ENCODE measurements at regions of chr14 and their contacts with region 1.

Region 1: GRCh38 chr14:32076278-32077080 is 625 bp upstream of the ARHGAP5 start:
- DNase-seq: peak; percentile 97
- H3K4me3 Mint-ChIP-seq: peak overlapping the region; percentile 98
- H3K27ac Mint-ChIP-seq: peak overlapping the region; percentile 96
- H3K4me1 Mint-ChIP-seq: peaks cover 31% of the 10 kb centered on the region
- H3K27me3 Mint-ChIP-seq: no peaks in the 10 kb centered on the region
- CTCF ChIP-seq: no peak

Region 2: DNA sequence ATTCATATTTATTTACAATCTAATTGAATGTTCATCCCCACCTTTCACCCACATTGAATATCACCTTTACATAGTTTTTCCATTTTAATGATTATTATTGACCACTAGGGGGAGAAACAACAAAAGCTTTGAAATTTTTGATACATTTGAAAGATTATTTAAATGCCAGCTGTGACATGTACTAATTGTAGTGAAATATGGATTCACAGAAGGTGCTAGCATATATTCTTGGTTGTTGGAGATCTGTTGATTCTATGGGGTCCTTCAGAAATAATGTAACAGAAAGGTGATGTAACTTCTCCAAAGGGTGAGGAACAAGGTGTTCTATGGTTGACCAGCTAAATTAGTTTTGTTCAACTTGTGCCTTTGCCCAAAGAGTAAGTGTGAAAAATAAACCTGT is 566.3 kb before region 1 on chr14:
- CTCF ChIA-PET with region 1: no interaction called
- POLR2A ChIA-PET with region 1: no interaction called
- intact Hi-C with region 1: loop called (anchors 2 kb)
- DNase-seq: peak; percentile 43
- H3K4me3 Mint-ChIP-seq: no peak overlapping the region
- H3K27ac Mint-ChIP-seq: no peak overlapping the region
- H3K4me1 Mint-ChIP-seq: peaks cover 8% of the 10 kb centered on the region
- H3K27me3 Mint-ChIP-seq: no peaks in the 10 kb centered on the region
- CTCF ChIP-seq: peak; percentile 44

Region 3: DNA sequence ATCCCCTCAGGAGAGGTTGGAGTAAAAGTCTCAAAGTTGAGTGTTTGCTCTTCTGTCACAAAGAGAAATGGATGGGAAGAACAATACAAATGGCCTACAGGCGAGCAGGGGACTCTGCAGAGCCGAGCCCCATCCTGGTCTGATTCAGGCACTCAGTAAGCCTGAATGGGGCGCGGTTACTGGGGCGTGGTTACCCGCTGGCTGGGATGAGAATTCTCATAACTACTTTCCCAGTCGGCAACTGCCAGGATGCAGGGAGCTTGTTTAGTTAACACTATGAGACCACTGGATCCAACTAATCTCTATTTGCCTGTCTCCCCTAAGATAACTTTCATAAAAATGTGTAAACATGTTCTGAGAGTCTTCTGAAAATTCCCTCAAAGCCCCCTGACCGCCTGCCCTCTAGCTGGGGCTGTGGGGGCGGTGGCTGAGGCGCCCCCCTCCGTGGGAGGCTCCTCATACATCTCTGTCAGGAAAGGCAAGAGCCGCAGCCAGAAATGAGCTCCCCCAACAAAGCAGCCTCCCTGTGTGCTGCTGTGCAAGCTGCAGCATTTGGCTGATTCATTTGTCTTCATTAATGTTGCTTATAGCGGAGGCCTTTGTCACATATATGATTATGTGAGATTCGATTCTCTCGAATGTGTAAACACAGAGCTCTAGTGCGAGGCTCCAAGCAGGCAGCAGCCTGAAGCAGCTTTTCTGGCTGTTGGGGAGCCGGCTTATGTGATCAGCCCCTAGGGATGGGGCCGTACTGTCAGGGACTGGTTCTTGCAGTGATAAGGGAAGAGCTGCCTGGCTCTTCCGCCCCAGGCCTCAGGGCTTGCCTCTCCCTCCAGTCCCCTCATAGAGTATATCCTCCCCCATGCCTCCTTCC is 125.5 kb before region 1 on chr14:
- CTCF ChIA-PET with region 1: interaction called, 4 read pairs
- POLR2A ChIA-PET with region 1: interaction called, 38 read pairs
- intact Hi-C with region 1: no loop called
- DNase-seq: peak; percentile 67
- H3K4me3 Mint-ChIP-seq: no peak overlapping the region
- H3K27ac Mint-ChIP-seq: peak overlapping the region; percentile 37
- H3K4me1 Mint-ChIP-seq: peaks cover 45% of the 10 kb centered on the region
- H3K27me3 Mint-ChIP-seq: no peaks in the 10 kb centered on the region
- CTCF ChIP-seq: no peak

Region 4: DNA sequence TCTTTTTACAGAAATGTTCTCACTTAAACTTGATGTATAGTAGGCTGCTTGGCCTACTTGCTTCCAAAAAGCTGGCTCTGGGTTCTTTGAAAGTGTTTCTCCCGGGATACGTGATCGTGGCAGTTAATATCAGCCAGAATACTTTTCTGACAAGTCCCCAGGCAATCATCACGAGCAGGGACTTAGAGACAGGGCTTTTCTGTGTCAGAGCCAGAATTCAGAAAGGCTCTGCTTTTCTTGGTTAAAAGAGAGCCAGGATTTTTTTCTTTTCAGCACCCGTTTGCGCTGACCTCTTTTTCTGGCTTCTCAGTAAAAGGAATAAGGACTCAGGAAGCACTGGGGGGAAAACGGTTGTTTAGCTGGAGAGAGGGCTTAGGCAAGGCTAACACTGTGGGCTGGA is 57.2 kb before region 1 on chr14:
- CTCF ChIA-PET with region 1: interaction called, 10 read pairs
- POLR2A ChIA-PET with region 1: interaction called, 107 read pairs
- intact Hi-C with region 1: no loop called
- DNase-seq: no peak
- H3K4me3 Mint-ChIP-seq: no peak overlapping the region
- H3K27ac Mint-ChIP-seq: peak overlapping the region; percentile 31
- H3K4me1 Mint-ChIP-seq: peaks cover 21% of the 10 kb centered on the region
- H3K27me3 Mint-ChIP-seq: no peaks in the 10 kb centered on the region
- CTCF ChIP-seq: no peak

Region 5: GRCh38 chr14:32202998-32203882 is 126.8 kb after region 1 on chr14 and contains the start of gene RNU6-8:
- CTCF ChIA-PET with region 1: interaction called, 4 read pairs
- POLR2A ChIA-PET with region 1: interaction called, 14 read pairs
- intact Hi-C with region 1: loop called (anchors 2 kb)
- DNase-seq: peak; percentile 87
- H3K4me3 Mint-ChIP-seq: peak within 1 kb of the TSS; percentile 89
- H3K27ac Mint-ChIP-seq: peak within 1 kb of the TSS; percentile 98
- H3K4me1 Mint-ChIP-seq: peaks cover 21% of the 10 kb centered on the region
- H3K27me3 Mint-ChIP-seq: no peaks in the 10 kb centered on the region
- CTCF ChIP-seq: no peak
- total RNA-seq, gene RNU6-8: not detected in 2 replicates

Region 6: DNA sequence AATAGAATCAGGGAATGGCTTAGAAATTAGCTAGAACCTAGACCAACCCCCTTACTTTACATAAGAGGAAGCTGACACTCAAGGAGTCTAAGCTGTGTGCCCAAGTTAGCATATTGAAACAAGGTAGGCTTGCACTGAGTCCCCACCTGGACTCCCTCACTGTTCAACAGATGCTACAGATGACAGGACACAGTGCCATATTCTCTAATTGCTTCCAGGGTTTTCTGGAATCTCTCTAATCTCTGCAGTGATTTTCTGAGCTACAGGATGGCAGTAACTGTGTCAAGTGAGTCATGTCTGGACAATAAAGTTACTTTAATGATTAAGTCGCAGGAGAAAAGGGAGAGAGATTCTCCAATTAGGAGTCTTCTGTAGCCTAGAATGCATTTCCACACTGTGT is 288.5 kb after region 1 on chr14:
- CTCF ChIA-PET with region 1: no interaction called
- POLR2A ChIA-PET with region 1: no interaction called
- intact Hi-C with region 1: no loop called
- DNase-seq: no peak
- H3K4me3 Mint-ChIP-seq: no peak overlapping the region
- H3K27ac Mint-ChIP-seq: no peak overlapping the region
- H3K4me1 Mint-ChIP-seq: peaks cover 18% of the 10 kb centered on the region
- H3K27me3 Mint-ChIP-seq: no peaks in the 10 kb centered on the region
- CTCF ChIP-seq: no peak

Region 7: DNA sequence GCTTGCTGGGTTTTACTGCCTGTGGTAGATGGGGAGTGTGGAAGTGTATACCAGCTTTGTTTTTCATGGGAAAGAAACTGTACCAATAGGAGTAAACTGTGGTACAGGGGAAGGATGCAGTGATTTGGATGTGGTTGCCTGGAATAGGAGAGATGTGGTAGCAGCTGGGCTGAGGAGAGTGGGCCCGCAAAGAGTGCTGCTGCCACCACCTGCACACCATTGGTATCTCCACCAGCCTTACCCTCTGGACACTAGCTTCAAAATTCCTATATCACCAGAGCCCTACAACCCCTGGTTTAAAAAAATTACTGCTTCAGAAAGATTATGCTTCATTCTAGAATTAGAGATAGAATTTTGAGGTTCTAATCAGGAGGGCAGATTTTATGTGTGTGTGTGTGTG is 306.2 kb after region 1 on chr14:
- CTCF ChIA-PET with region 1: interaction called, 3 read pairs
- POLR2A ChIA-PET with region 1: no interaction called
- intact Hi-C with region 1: loop called (anchors 2 kb)
- DNase-seq: peak; percentile 38
- H3K4me3 Mint-ChIP-seq: no peak overlapping the region
- H3K27ac Mint-ChIP-seq: no peak overlapping the region
- H3K4me1 Mint-ChIP-seq: peaks cover 27% of the 10 kb centered on the region
- H3K27me3 Mint-ChIP-seq: no peaks in the 10 kb centered on the region
- CTCF ChIP-seq: peak; percentile 75

Region 8: GRCh38 chr14:32560209-32560857 is 483.9 kb after region 1 on chr14:
- CTCF ChIA-PET with region 1: interaction called, 3 read pairs
- POLR2A ChIA-PET with region 1: interaction called, 12 read pairs
- intact Hi-C with region 1: loop called (anchors 1 kb)
- DNase-seq: peak; percentile 85
- H3K4me3 Mint-ChIP-seq: no peak overlapping the region
- H3K27ac Mint-ChIP-seq: no peak overlapping the region
- H3K4me1 Mint-ChIP-seq: peaks cover 10% of the 10 kb centered on the region
- H3K27me3 Mint-ChIP-seq: no peaks in the 10 kb centered on the region
- CTCF ChIP-seq: peak; percentile 77

Measured in MCF 10A (cell line).